Dorsolateral prefrontal cortex (tissue), 120 donors: ENCODE measurements at regions of chr15 and their contacts with region 1.

Region 1: GRCh38 chr15:100633763-100634075 is 31.3 kb downstream of the ASB7 start:
- DNase-seq: no peak
- H3K4me3 ChIP-seq: no peak overlapping the region
- H3K27ac ChIP-seq: no peak overlapping the region
- H3K27me3 ChIP-seq: no peaks in the 10 kb centered on the region
- CTCF ChIP-seq: no peak

Region 2: GRCh38 chr15:100602064-100602822 is 31.5 kb before region 1 on chr15 and contains the starts of genes ASB7 and LINS1:
- intact Hi-C with region 1: no loop called
- DNase-seq: peak; percentile 99 to 100 (median 100)
- H3K4me3 ChIP-seq: peak within 1 kb of the TSS; percentile 78 to 100 (median 95)
- H3K27ac ChIP-seq: peak within 1 kb of the TSS in 58 of 59 donors; percentile 13 to 93 (median 84)
- H3K27me3 ChIP-seq: no peaks in the 10 kb centered on the region
- CTCF ChIP-seq: peak in 33 of 56 donors; percentile 2 to 62 (median 26)
- total RNA-seq, gene ASB7: 7.9 to 18.5 (median 12.6) TPM
- total RNA-seq, gene LINS1: 12.5 to 45.4 (median 28.1) TPM

Region 3: GRCh38 chr15:101264911-101265641 is 631.4 kb after region 1 on chr15:
- intact Hi-C with region 1: loop called in 1 of 2 experiments (anchors 5 kb)
- DNase-seq: no peak
- H3K4me3 ChIP-seq: no peak overlapping the region
- H3K27ac ChIP-seq: no peak overlapping the region
- H3K27me3 ChIP-seq: no peaks in the 10 kb centered on the region
- CTCF ChIP-seq: no peak